CD4-positive, alpha-beta memory T cell (primary cell): ENCODE measurements at regions of chr1 and their contacts with region 1.

Region 1: DNA sequence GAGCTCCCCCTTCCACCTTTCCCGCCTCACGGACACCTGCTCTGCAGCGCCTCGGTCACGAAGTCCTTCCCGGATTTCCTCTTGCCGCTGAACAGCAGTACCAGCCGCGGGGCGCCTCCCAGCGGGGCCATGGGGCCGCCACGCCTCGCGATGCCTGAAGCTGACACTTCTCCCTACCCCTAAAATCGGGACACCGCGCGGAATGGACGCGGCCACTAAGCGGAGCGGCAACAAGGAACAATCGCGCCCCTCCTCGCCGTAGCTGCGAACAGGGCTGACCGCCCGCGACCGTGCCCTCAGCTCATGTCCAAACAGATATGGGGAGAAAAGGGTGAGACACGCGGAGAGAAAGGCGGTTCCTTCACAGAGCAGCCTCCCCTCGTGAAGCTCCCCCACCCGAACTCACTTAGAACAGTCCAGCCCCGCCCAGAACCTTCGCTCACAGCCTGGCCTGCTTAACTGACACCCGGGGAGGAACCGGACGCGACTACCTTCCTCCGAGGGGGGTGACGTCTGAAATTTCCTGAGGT is at the start of gene PMVK:
- DNase-seq: peak; percentile 98 to 99 (median 98)
- H3K4me3 ChIP-seq: peak within 1 kb of the TSS; percentile 51 to 93
- H3K4me3 Mint-ChIP-seq: peak within 1 kb of the TSS; percentile 93 to 99 (median 97)
- H3K27ac ChIP-seq: peak within 1 kb of the TSS; percentile 96
- H3K27ac Mint-ChIP-seq: peak within 1 kb of the TSS; percentile 97 to 100 (median 99)
- H3K4me1 ChIP-seq: peaks cover 54% of the 10 kb centered on the region
- H3K4me1 Mint-ChIP-seq: peaks cover 36 to 70% (median 58%) of the 10 kb centered on the region in 4 donors
- H3K27me3 ChIP-seq: no peaks in the 10 kb centered on the region
- H3K27me3 Mint-ChIP-seq: no peaks in the 10 kb centered on the region
- total RNA-seq, gene PMVK: 17.6 to 21.2 TPM

Region 2: DNA sequence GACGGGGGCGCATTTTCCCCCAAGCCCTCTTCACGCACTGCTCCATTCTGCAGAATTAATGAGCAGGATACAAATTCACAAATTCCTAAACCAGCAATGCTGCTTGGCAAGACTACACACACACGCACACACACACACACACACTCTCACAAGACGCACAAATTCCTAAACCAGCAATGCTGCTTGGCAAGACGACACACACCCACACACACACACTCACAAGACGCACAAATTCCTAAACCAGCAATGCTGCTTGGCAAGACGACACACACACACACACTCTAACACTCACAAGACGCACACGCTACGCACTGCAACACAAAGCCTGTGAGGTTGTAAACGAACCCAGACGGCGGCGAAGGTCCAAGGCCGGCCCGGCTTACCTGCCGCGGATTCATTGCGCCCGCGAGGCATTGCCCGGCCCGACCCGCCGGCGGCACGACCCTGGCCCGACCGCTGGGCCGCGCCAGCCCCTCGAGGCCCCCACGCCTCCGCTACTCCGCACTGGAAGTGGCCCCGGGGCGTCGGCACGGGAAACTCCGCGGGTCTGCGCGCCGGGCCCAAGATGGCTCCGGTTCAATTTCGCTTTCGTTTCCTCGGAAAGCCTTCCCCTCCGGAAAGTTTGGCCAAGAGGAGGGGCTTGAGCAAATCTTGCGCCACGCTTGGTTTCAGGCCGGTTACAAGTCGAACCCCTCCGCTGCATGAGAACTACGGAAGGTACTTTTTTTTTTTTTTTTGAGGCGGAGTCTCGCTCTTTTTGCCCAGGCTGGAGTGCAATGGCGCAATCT is 328.8 kb before region 1 on chr1 and contains the start of gene ADAR:
- CTCF ChIA-PET with region 1: interaction called, 3 read pairs
- POLR2A ChIA-PET with region 1: interaction called, 10 read pairs
- intact Hi-C with region 1: loop called (anchors 2 kb)
- DNase-seq: peak; percentile 89 to 96 (median 93)
- H3K4me3 ChIP-seq: peak within 1 kb of the TSS; percentile 80 to 94
- H3K4me3 Mint-ChIP-seq: peak within 1 kb of the TSS; percentile 93 to 99 (median 98)
- H3K27ac ChIP-seq: peak within 1 kb of the TSS; percentile 97
- H3K27ac Mint-ChIP-seq: peak within 1 kb of the TSS; percentile 93 to 100 (median 98)
- H3K4me1 ChIP-seq: peaks cover 58% of the 10 kb centered on the region
- H3K4me1 Mint-ChIP-seq: peaks cover 51 to 87% (median 63%) of the 10 kb centered on the region in 4 donors
- H3K27me3 ChIP-seq: no peaks in the 10 kb centered on the region
- H3K27me3 Mint-ChIP-seq: no peaks in the 10 kb centered on the region
- total RNA-seq, gene ADAR: 240 to 247 TPM

Region 3: DNA sequence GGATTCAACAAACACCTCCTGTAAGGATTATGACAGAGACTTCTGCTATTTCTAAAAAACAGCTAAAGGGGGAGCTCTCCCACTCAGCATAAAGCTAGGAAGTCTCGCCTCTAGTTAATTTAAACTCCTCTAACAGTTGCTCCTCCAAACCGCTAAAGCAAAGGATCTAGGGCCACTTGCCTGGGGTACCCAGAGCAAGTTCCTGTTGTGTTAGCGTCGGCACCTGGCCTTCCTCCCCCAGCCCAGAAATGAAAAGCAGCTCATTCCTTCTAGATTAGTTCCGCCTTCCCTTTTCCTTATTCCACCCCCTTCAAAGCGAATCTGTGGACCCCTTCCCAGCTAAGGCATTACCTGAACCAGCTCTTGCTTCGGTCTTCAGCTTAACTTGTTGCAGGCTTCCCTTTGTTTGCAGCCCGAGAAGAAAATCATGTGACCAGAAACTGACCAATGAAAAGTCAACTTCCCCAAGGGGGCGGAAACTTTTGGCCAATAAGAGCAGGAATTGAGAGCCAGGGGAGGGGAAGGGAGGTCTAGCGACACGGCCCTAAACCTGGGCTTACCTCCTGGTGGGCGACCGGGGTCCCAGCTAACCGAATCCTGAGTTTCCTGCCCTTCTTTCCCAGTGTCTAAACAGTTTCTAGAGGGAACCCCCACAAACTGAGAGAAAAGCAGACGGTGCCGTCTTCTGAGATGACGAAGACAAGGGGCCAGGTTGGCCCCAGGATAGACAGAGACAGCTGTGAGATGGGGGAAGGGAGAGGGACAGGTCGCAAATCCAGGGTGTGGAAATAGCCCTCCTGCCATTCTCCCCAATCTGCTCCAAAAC is 19.3 kb after region 1 on chr1 and contains the start of gene PBXIP1:
- CTCF ChIA-PET with region 1: interaction called, 65 read pairs
- POLR2A ChIA-PET with region 1: interaction called, 50 read pairs
- intact Hi-C with region 1: loop called (anchors 1 kb)
- DNase-seq: peak; percentile 92 to 94 (median 92)
- H3K4me3 ChIP-seq: peak within 1 kb of the TSS; percentile 80 to 90
- H3K4me3 Mint-ChIP-seq: peak within 1 kb of the TSS; percentile 94 to 100 (median 98)
- H3K27ac ChIP-seq: peak within 1 kb of the TSS; percentile 100
- H3K27ac Mint-ChIP-seq: peak within 1 kb of the TSS; percentile 98 to 100 (median 100)
- H3K4me1 ChIP-seq: peaks cover 75% of the 10 kb centered on the region
- H3K4me1 Mint-ChIP-seq: peaks cover 43 to 87% (median 74%) of the 10 kb centered on the region in 4 donors
- H3K27me3 ChIP-seq: no peaks in the 10 kb centered on the region
- H3K27me3 Mint-ChIP-seq: no peaks in the 10 kb centered on the region
- total RNA-seq, gene PBXIP1: 435 to 438 TPM

Region 4: GRCh38 chr1:154982897-154983648 is 46.5 kb after region 1 on chr1 and contains the start of gene FLAD1:
- CTCF ChIA-PET with region 1: interaction called, 6 read pairs
- POLR2A ChIA-PET with region 1: interaction called, 17 read pairs
- intact Hi-C with region 1: loop called (anchors 1 kb)
- DNase-seq: peak; percentile 96 to 99 (median 96)
- H3K4me3 ChIP-seq: peak within 1 kb of the TSS; percentile 79 to 92
- H3K4me3 Mint-ChIP-seq: no peak within 1 kb of the TSS
- H3K27ac ChIP-seq: peak within 1 kb of the TSS; percentile 76
- H3K27ac Mint-ChIP-seq: peak within 1 kb of the TSS in 1 of 7 donors; percentile 92
- H3K4me1 ChIP-seq: peaks cover 27% of the 10 kb centered on the region
- H3K4me1 Mint-ChIP-seq: peaks cover 4 to 8% (median 6%) of the 10 kb centered on the region in 4 donors
- H3K27me3 ChIP-seq: no peaks in the 10 kb centered on the region
- H3K27me3 Mint-ChIP-seq: no peaks in the 10 kb centered on the region
- total RNA-seq, gene FLAD1: 52.4 to 56.6 TPM

Region 5: GRCh38 chr1:155050560-155051341 is 114.1 kb after region 1 on chr1 and contains the start of gene ADAM15:
- CTCF ChIA-PET with region 1: interaction called, 3 read pairs
- POLR2A ChIA-PET with region 1: interaction called, 15 read pairs
- intact Hi-C with region 1: no loop called
- DNase-seq: peak; percentile 74 to 79 (median 77)
- H3K4me3 ChIP-seq: peak within 1 kb of the TSS; percentile 69 to 92
- H3K4me3 Mint-ChIP-seq: peak within 1 kb of the TSS; percentile 86 to 92 (median 88)
- H3K27ac ChIP-seq: peak within 1 kb of the TSS; percentile 71
- H3K27ac Mint-ChIP-seq: peak within 1 kb of the TSS; percentile 70 to 93 (median 90)
- H3K4me1 ChIP-seq: peaks cover 27% of the 10 kb centered on the region
- H3K4me1 Mint-ChIP-seq: peaks cover 14 to 33% (median 27%) of the 10 kb centered on the region in 4 donors
- H3K27me3 ChIP-seq: no peaks in the 10 kb centered on the region
- H3K27me3 Mint-ChIP-seq: no peaks in the 10 kb centered on the region
- total RNA-seq, gene ADAM15: 33.6 to 39.8 TPM

Region 6: DNA sequence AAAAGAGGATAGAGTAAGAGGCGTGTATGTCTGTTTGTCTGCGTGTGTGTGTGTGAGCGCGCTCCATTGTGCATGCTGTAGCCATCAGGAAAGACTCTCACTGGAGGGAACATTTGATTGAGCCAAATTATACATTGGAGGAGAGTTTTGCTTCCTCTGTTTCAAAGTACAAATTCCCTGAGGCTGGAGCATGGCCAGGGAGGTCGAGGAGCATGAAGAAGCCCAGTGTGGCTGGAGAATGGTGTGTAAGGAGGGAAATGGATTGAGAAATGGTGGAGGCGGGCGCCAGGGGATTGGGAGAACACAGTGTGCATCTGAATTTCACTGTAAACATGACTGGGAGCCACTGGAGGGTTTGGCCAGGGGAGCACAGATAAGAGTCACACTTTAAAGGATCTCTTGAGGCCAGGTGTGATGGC is 169.0 kb after region 1 on chr1:
- CTCF ChIA-PET with region 1: no interaction called
- POLR2A ChIA-PET with region 1: no interaction called
- intact Hi-C with region 1: no loop called
- DNase-seq: no peak
- H3K4me3 ChIP-seq: no peak overlapping the region
- H3K4me3 Mint-ChIP-seq: no peak overlapping the region
- H3K27ac ChIP-seq: no peak overlapping the region
- H3K27ac Mint-ChIP-seq: no peak overlapping the region
- H3K4me1 ChIP-seq: no peaks in the 10 kb centered on the region
- H3K4me1 Mint-ChIP-seq: no peaks in the 10 kb centered on the region
- H3K27me3 ChIP-seq: no peaks in the 10 kb centered on the region
- H3K27me3 Mint-ChIP-seq: peaks cover 0 to 5% of the 10 kb centered on the region in 2 donors

Region 7: GRCh38 chr1:155257361-155257760 is 320.7 kb after region 1 on chr1:
- CTCF ChIA-PET with region 1: no interaction called
- POLR2A ChIA-PET with region 1: no interaction called
- intact Hi-C with region 1: no loop called
- DNase-seq: no peak
- H3K4me3 ChIP-seq: no peak overlapping the region
- H3K4me3 Mint-ChIP-seq: peak overlapping the region in 2 of 8 donors; percentile 10 to 68
- H3K27ac ChIP-seq: no peak overlapping the region
- H3K27ac Mint-ChIP-seq: peak overlapping the region in 4 of 7 donors; percentile 4 to 85 (median 48)
- H3K4me1 ChIP-seq: peaks cover 36% of the 10 kb centered on the region
- H3K4me1 Mint-ChIP-seq: peaks cover 22 to 61% (median 46%) of the 10 kb centered on the region in 4 donors
- H3K27me3 ChIP-seq: no peaks in the 10 kb centered on the region
- H3K27me3 Mint-ChIP-seq: no peaks in the 10 kb centered on the region

Region 8: DNA sequence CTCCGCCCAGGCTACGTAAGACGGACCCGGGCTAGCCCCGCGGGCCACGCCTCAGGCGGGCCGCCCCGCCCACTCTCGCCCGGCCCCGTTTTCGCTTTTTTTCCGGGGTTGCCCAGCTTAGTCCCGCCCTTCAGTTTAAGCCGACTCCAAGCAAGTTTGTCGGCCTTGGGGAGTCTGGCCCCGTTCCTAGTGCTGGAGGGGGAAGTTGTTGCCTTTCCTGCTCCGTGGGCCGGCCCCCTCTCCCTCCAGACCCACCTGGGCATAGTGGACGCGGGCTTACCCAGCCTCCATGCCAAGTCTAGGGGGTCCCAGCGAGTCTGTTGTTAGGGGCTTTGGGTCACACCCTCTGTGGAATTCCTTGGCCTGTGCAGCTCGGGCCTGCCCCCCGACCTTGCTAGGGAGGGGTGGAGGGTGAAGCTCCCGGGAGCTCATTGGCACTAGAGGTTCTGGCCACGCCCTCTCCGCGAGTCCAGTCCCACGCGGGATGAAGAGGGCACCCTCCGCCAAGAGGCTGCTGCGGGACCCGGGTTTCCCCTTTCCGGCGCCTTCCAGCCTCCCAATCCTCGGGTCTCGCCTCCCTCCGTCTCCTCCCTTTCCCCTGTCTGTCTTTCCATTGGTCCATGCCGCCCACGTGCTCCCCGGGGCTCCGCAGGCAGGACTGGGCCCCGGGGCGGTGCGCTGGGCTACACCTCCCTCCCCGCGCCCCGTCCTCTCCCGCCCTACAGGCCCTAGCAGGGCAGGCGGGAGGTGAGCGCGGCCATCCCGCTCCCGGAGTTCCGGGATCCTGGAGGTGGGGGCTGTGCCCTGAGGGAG is 387.4 kb after region 1 on chr1:
- CTCF ChIA-PET with region 1: no interaction called
- POLR2A ChIA-PET with region 1: no interaction called
- intact Hi-C with region 1: loop called (anchors 5 kb)
- DNase-seq: peak; percentile 83 to 93 (median 85)
- H3K4me3 ChIP-seq: peak overlapping the region; percentile 91 to 96
- H3K4me3 Mint-ChIP-seq: peak overlapping the region; percentile 70 to 91 (median 88)
- H3K27ac ChIP-seq: peak overlapping the region; percentile 96
- H3K27ac Mint-ChIP-seq: peak overlapping the region; percentile 82 to 93 (median 90)
- H3K4me1 ChIP-seq: peaks cover 31% of the 10 kb centered on the region
- H3K4me1 Mint-ChIP-seq: peaks cover 14 to 46% (median 29%) of the 10 kb centered on the region in 4 donors
- H3K27me3 ChIP-seq: no peaks in the 10 kb centered on the region
- H3K27me3 Mint-ChIP-seq: no peaks in the 10 kb centered on the region